B cell (primary cell): ENCODE measurements at regions of chr1 and their contacts with region 1.

Region 1: DNA sequence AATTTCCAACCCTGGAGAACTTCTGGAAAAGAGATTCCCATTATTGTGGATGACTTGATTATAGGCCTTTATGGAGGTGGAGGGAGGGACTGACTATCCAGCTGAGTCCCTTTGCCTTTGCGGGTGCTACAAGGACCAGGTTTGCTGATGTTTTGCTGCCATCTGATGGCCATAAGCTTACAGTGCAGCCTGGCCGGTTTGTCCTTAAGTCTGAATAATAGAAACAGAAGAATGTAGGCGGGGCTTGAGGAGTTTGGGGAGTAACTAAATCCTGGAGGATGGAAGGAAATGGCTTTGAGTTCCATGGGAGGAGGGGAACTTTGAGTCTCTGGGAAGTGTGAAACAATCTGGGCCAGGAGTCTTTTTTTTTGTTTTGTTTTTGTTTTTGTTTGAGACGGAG is 55.7 kb upstream of the CD1D start:
- DNase-seq: peak; percentile 86
- ATAC-seq: peak; percentile 89
- H3K4me3 ChIP-seq: no peak overlapping the region
- H3K4me3 Mint-ChIP-seq: no peak overlapping the region
- H3K27ac ChIP-seq: no peak overlapping the region
- H3K27ac Mint-ChIP-seq: peak overlapping the region; percentile 5
- H3K4me1 ChIP-seq: peaks cover 0 to 5% of the 10 kb centered on the region in 2 donors
- H3K4me1 Mint-ChIP-seq: peaks cover 3% of the 10 kb centered on the region
- H3K27me3 ChIP-seq: peaks cover 0 to 18% (median 9%) of the 10 kb centered on the region in 4 experiments
- H3K27me3 Mint-ChIP-seq: peaks cover 25% of the 10 kb centered on the region
- CTCF ChIP-seq: peak; percentile 86

Region 2: DNA sequence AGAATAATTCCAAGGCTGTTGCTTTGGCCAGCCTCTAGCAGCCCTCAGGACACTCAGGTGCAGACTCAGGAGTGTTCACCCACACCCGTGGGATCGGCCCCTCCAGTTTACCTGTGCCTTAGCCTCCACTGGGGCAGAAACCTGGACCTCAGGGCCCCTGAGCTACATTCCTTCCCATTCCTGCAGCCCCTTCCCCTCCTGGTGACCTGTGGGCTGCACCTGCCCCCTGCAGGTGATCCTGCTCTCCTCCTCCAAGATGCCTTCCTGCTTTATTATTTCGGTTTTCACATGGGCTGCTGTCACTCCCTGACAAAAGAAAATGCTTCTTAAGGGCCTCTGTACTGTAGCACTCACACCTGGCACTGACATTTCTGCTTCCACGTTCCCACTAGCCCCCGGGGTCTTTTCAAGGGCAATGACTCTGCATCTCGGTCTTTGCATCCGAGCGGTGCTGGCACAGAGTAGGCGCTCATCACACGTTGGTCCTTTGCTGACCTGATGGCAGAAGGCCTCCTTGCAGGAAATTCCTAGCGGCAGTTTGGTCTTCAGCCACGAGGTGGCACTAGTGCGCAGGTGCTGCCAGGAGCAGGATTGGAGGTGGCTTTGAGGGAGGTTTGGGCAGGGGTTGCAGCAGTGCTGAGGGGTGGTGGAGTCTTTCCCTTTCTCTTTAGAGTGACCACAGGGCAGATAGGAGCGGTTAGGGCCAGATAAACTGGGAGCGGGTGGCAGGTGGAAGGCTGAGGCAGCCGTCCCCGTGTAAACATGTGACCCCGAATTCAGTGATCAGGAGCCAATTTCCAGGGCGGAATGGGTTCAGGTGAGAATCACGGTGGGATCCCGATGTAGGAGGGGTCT is 961.5 kb before region 1 on chr1:
- CTCF ChIA-PET with region 1: no interaction called
- POLR2A ChIA-PET with region 1: no interaction called
- intact Hi-C with region 1: loop called (anchors 10 kb)
- DNase-seq: peak; percentile 78
- ATAC-seq: peak; percentile 73
- H3K4me3 ChIP-seq: no peak overlapping the region
- H3K4me3 Mint-ChIP-seq: no peak overlapping the region
- H3K27ac ChIP-seq: no peak overlapping the region
- H3K27ac Mint-ChIP-seq: no peak overlapping the region
- H3K4me1 ChIP-seq: peaks cover 0 to 4% of the 10 kb centered on the region in 2 donors
- H3K4me1 Mint-ChIP-seq: peaks cover 5% of the 10 kb centered on the region
- H3K27me3 ChIP-seq: peaks cover 0 to 9% (median 2%) of the 10 kb centered on the region in 4 experiments
- H3K27me3 Mint-ChIP-seq: peaks cover 32% of the 10 kb centered on the region
- CTCF ChIP-seq: peak; percentile 91

Region 3: DNA sequence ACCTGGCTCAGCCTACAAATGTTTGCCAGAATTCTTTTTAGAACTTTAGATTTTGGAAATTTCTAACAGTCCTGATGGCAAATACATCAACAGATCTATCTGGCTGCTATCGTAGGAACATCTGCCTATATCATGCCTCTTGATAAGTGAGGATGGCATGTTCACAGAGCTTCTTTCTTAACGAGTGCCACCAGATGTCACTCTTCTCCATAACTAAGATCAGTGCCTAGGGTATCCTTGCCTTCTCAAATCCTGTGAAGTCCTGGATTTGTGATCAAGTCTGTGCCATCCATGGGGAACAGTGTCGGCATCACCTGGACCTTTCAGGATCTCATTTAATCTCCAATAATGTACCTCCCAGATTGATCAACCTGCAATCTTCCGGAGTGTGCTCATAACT is 246.9 kb before region 1 on chr1:
- CTCF ChIA-PET with region 1: interaction called, 13 read pairs
- POLR2A ChIA-PET with region 1: no interaction called
- intact Hi-C with region 1: loop called (anchors 2 kb)
- DNase-seq: peak; percentile 51
- ATAC-seq: no peak
- H3K4me3 ChIP-seq: no peak overlapping the region
- H3K4me3 Mint-ChIP-seq: no peak overlapping the region
- H3K27ac ChIP-seq: no peak overlapping the region
- H3K27ac Mint-ChIP-seq: no peak overlapping the region
- H3K4me1 ChIP-seq: peaks cover 11 to 13% of the 10 kb centered on the region in 2 donors
- H3K4me1 Mint-ChIP-seq: peaks cover 20% of the 10 kb centered on the region
- H3K27me3 ChIP-seq: no peaks in the 10 kb centered on the region
- H3K27me3 Mint-ChIP-seq: no peaks in the 10 kb centered on the region
- CTCF ChIP-seq: peak; percentile 29

Region 4: DNA sequence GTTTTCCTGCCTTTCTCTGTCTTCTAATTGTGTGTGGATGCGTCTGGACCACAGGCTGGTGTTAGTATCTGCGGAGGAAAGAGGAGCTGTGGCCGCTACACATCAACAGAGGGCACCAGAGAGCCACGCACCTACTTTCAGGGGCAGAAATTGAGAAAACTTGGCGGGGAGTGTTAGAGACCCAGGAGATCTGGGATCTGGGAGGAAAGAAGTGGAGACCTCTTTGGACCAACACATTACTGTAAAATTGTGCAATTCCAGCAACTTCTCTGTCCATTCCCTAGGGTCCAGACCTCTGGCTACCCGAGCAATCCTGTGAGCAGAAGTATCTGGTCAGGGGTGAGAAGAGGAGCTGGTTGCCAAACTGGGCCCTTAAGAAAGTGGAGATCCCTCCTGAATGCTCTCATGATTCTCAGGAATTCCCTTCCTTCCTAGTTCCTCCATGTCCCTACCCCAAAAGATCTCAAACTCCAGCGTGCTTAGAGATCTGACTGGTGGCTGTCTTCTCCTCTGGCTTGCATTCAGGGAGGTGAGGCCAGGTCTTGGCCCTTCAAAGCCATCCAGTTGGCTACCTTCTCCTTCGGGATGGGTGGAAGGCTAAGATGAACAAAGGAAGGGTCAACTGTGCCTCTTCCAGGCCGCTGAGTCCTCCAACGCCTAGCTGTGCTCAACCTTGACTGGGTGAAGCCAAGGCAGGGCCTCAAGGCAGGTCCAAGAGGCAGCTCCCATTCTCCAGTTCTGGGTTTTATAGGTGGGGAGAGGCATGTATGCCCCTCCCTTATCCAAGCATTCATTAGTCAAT is 132.8 kb before region 1 on chr1:
- CTCF ChIA-PET with region 1: interaction called, 534 read pairs
- POLR2A ChIA-PET with region 1: interaction called, 7 read pairs
- intact Hi-C with region 1: loop called (anchors 1 kb)
- DNase-seq: peak; percentile 75
- ATAC-seq: peak; percentile 70
- H3K4me3 ChIP-seq: no peak overlapping the region
- H3K4me3 Mint-ChIP-seq: peak overlapping the region; percentile 86
- H3K27ac ChIP-seq: no peak overlapping the region
- H3K27ac Mint-ChIP-seq: no peak overlapping the region
- H3K4me1 ChIP-seq: peaks cover 16 to 21% of the 10 kb centered on the region in 2 donors
- H3K4me1 Mint-ChIP-seq: peaks cover 19% of the 10 kb centered on the region
- H3K27me3 ChIP-seq: peaks cover 0 to 46% (median 24%) of the 10 kb centered on the region in 4 experiments
- H3K27me3 Mint-ChIP-seq: peaks cover 49% of the 10 kb centered on the region
- CTCF ChIP-seq: peak; percentile 98

Region 5: DNA sequence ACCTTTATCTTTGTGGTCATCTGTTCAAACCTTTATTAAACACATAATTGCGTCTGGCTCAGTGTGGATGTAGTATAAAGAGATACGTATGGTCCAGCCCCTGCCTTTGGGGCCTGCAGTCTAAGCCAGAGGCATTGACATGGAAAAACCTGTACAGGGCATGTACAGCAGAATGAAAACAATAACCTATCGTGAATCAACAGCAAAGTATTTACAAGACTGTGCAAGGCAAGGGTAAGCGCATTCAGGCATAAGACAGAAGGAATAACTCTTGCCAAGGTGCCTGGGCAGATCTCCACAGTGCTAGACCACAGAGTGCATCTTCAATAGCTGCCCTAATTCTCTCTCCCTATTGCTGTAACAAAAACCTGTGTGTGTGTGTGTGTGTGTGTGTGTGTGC is 96.0 kb before region 1 on chr1:
- CTCF ChIA-PET with region 1: no interaction called
- POLR2A ChIA-PET with region 1: no interaction called
- intact Hi-C with region 1: no loop called
- DNase-seq: no peak
- ATAC-seq: no peak
- H3K4me3 ChIP-seq: no peak overlapping the region
- H3K4me3 Mint-ChIP-seq: no peak overlapping the region
- H3K27ac ChIP-seq: no peak overlapping the region
- H3K27ac Mint-ChIP-seq: no peak overlapping the region
- H3K4me1 ChIP-seq: no peaks in the 10 kb centered on the region
- H3K4me1 Mint-ChIP-seq: no peaks in the 10 kb centered on the region
- H3K27me3 ChIP-seq: peaks cover 0 to 4% (median 0%) of the 10 kb centered on the region in 4 experiments
- H3K27me3 Mint-ChIP-seq: peaks cover 17% of the 10 kb centered on the region
- CTCF ChIP-seq: no peak

Region 6: DNA sequence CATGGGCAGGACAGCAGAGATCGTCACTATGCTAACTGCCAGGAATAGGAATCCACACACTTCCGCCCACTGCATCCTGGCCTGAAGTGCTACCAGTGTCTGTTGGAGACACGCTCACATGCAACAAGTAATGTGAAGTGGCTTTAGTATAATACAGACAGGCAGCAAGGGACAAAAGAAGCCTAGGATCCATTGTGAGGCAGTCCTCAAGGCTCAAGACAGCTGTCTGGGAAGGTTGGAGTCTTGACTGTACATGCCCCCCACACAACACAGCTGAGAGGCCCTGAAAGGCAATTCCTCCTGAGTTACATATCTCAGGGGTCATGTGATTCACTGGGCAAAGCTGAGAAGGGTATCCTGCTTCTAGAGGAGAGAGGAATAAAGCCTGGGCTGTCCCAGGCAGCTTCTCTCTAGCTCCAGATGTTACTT is 15.8 kb after region 1 on chr1:
- CTCF ChIA-PET with region 1: interaction called, 12 read pairs
- POLR2A ChIA-PET with region 1: no interaction called
- intact Hi-C with region 1: no loop called
- DNase-seq: no peak
- ATAC-seq: no peak
- H3K4me3 ChIP-seq: no peak overlapping the region
- H3K4me3 Mint-ChIP-seq: no peak overlapping the region
- H3K27ac ChIP-seq: no peak overlapping the region
- H3K27ac Mint-ChIP-seq: no peak overlapping the region
- H3K4me1 ChIP-seq: no peaks in the 10 kb centered on the region
- H3K4me1 Mint-ChIP-seq: no peaks in the 10 kb centered on the region
- H3K27me3 ChIP-seq: no peaks in the 10 kb centered on the region
- H3K27me3 Mint-ChIP-seq: no peaks in the 10 kb centered on the region
- CTCF ChIP-seq: no peak

Region 7: DNA sequence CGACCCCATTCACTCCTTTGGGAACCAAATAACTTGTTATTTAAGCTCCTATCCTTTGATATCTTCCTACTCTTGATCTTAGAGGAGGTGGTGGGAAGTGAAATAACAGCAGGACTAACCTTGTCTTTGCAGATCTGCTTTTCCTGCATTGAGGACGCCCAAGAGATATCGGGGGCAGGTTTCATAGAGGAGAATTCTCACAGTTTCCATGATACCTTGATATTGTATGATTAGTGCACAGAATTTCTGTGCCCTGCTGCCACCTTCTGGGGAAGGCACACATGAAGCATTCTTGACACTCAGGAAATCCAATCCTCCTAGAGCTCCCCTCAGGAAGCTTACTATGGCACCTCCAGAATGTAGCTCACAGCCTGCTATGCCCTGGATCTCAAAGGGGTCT is 204.7 kb after region 1 on chr1:
- CTCF ChIA-PET with region 1: interaction called, 27 read pairs
- POLR2A ChIA-PET with region 1: no interaction called
- intact Hi-C with region 1: no loop called
- DNase-seq: peak; percentile 63
- ATAC-seq: no peak
- H3K4me3 ChIP-seq: no peak overlapping the region
- H3K4me3 Mint-ChIP-seq: no peak overlapping the region
- H3K27ac ChIP-seq: no peak overlapping the region
- H3K27ac Mint-ChIP-seq: no peak overlapping the region
- H3K4me1 ChIP-seq: peaks cover 43 to 55% of the 10 kb centered on the region in 2 donors
- H3K4me1 Mint-ChIP-seq: peaks cover 25% of the 10 kb centered on the region
- H3K27me3 ChIP-seq: no peaks in the 10 kb centered on the region
- H3K27me3 Mint-ChIP-seq: no peaks in the 10 kb centered on the region
- CTCF ChIP-seq: peak; percentile 42

Region 8: DNA sequence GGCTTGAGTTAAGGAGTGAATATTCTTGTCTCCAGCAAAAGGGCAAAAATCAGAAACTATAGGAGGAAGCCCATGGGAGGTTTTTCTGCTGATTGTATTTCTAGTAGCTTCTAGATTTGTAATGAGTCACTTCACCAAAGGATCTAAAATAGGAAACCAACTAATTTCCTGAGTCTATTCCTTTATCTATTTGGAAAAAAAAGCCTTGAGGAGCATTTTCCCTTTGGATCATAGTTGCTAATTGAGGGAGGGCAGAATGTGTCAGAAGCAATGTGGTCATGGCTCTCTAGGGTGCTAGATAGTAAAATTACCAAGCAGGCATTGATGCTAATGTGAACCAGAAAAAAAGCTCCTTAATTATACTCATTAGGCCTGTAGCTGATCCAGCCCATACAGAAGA is 346.9 kb after region 1 on chr1 and contains the start of gene OR10R2:
- CTCF ChIA-PET with region 1: no interaction called
- POLR2A ChIA-PET with region 1: no interaction called
- intact Hi-C with region 1: no loop called
- DNase-seq: no peak
- ATAC-seq: no peak
- H3K4me3 ChIP-seq: no peak within 1 kb of the TSS
- H3K4me3 Mint-ChIP-seq: no peak within 1 kb of the TSS
- H3K27ac ChIP-seq: no peak within 1 kb of the TSS
- H3K27ac Mint-ChIP-seq: no peak within 1 kb of the TSS
- H3K4me1 ChIP-seq: no peaks in the 10 kb centered on the region
- H3K4me1 Mint-ChIP-seq: no peaks in the 10 kb centered on the region
- H3K27me3 ChIP-seq: peaks cover 0 to 3% (median 1%) of the 10 kb centered on the region in 4 experiments
- H3K27me3 Mint-ChIP-seq: peaks cover 23% of the 10 kb centered on the region
- CTCF ChIP-seq: no peak
- total RNA-seq, gene OR10R2: not detected in 2 replicates